Activated CD4-positive, alpha-beta T cell treated with anti-CD3 and anti-CD28 coated beads for 36 hours (primary cell): ENCODE measurements at regions of chr15 and their contacts with region 1.

Region 1: DNA sequence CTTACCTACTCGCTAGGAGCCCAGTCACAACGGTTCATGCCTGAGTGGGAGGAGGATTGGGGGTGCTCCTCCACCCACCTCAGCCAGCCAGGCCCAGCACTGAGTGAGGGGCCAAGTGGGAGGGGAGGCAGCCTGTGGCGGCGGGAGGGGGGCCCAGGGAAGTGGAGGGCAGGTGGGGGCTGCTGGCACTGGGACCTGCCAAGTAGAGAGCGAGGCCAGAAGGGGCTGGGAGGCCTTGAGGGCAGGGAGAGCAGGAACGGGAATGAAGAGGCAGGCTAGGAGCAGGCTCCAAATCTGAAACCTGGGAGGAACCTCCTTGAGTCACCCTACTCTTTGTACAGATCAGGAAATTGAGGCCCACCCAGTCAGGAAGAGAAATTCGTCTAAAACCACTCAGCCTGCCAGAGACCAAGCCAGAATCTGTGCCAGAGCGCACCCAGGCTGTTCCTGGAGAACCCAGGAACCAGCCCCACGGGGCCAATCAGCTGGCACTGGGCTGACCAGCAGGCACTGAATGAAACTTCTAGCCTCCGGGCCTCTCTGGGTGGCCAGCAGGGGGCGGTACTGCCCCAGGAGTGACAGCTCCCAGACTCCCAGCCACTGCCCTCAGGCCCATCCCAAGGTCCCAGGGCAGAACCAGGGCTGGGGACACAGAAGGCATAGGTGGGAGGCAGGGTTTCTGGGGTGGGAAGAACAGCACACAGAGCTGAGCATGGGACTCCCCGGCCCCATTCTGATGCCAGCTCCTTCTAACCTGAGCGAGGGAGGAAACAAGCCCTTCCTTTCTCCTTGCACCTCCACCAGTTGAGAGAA is 14.8 kb upstream of the CYP11A1 start:
- DNase-seq: peak; percentile 87
- ATAC-seq: peak; percentile 13
- H3K4me3 Mint-ChIP-seq: no peak overlapping the region
- H3K27ac Mint-ChIP-seq: peak overlapping the region; percentile 97
- H3K4me1 Mint-ChIP-seq: peaks cover 80% of the 10 kb centered on the region
- H3K27me3 Mint-ChIP-seq: no peaks in the 10 kb centered on the region

Region 2: GRCh38 chr15:74396445-74397238 is 14.4 kb after region 1 on chr15:
- CTCF ChIA-PET with region 1: interaction called, 48 read pairs
- POLR2A ChIA-PET with region 1: interaction called, 7 read pairs
- intact Hi-C with region 1: loop called (anchors 1 kb)
- DNase-seq: peak; percentile 83
- ATAC-seq: peak; percentile 57
- H3K4me3 Mint-ChIP-seq: peak overlapping the region; percentile 18
- H3K27ac Mint-ChIP-seq: peak overlapping the region; percentile 98
- H3K4me1 Mint-ChIP-seq: peaks cover 92% of the 10 kb centered on the region
- H3K27me3 Mint-ChIP-seq: no peaks in the 10 kb centered on the region

Region 3: DNA sequence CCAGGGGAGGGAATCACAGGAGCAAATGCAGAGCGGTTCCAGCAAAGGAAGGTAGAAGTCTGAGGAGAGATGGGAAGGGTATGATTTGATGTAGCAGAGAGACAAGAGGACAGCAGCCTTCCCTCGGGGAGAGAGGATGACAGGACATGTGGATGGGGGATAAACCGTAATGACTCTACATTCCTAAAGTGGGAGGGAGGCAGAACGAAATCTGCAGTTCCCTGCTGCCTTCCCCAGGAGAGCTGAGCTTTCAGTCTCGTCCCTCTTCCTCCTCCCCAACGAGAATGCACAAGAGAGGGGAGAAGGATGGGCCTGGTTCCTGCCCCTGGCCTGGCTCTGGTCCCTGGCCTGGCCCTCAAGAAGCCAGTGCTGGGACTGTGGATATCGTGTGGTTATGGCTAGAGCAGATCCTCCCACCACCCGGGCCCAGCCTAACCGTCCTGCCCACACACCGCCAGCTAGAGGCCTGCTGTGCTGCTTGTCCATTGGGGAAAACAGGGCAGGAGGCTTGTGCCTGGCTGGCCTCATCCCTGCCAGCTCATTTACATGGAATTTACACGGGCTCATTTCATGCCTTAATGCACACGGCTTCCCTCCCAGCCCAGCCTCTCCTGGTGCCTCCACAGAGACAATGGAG is 25.0 kb after region 1 on chr15:
- CTCF ChIA-PET with region 1: interaction called, 37 read pairs
- POLR2A ChIA-PET with region 1: interaction called, 8 read pairs
- intact Hi-C with region 1: loop called in 1 of 2 experiments (anchors 1 kb)
- DNase-seq: no peak
- ATAC-seq: no peak
- H3K4me3 Mint-ChIP-seq: no peak overlapping the region
- H3K27ac Mint-ChIP-seq: no peak overlapping the region
- H3K4me1 Mint-ChIP-seq: peaks cover 29% of the 10 kb centered on the region
- H3K27me3 Mint-ChIP-seq: no peaks in the 10 kb centered on the region

Region 4: DNA sequence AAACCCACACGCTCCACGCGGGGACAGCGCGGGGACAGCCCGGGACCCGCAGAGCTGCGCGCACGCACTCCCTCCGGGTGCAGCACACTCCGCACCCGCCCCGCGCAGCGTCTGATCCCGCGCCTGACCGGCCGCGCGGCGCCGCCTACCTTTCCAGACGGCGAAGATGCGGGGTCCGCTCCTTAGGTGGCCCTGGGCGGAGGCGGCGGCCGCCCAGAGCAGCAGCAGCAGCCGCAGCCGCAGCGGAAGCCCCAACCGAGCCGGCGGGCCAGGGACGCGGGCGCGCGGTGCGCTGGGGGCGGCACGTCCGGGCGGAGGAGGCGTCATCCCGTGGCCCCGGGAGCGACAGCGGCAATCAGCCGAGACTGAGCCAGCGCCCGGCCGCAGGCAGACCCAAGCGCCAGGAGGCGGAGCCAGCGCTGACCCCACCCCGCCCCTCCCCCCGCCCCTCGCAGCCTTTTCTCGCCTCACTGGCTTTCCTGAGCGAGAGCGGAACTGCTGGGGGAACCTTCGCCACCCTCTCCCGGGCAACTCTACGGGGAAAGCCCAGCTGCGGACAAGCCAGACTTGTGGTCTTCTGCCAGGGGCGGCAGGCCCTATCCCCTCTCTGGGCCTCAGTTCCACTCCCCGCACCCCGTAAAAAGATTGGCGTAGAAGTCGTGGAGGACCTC is 51.5 kb after region 1 on chr15 and contains the start of gene SEMA7A:
- CTCF ChIA-PET with region 1: interaction called, 176 read pairs
- POLR2A ChIA-PET with region 1: interaction called, 4 read pairs
- intact Hi-C with region 1: loop called (anchors 1 kb)
- DNase-seq: peak; percentile 90
- ATAC-seq: peak; percentile 89
- H3K4me3 Mint-ChIP-seq: peak within 1 kb of the TSS; percentile 83
- H3K27ac Mint-ChIP-seq: peak within 1 kb of the TSS; percentile 56
- H3K4me1 Mint-ChIP-seq: peaks cover 59% of the 10 kb centered on the region
- H3K27me3 Mint-ChIP-seq: no peaks in the 10 kb centered on the region
- total RNA-seq, gene SEMA7A: 57.3 to 57.7 TPM

Region 5: DNA sequence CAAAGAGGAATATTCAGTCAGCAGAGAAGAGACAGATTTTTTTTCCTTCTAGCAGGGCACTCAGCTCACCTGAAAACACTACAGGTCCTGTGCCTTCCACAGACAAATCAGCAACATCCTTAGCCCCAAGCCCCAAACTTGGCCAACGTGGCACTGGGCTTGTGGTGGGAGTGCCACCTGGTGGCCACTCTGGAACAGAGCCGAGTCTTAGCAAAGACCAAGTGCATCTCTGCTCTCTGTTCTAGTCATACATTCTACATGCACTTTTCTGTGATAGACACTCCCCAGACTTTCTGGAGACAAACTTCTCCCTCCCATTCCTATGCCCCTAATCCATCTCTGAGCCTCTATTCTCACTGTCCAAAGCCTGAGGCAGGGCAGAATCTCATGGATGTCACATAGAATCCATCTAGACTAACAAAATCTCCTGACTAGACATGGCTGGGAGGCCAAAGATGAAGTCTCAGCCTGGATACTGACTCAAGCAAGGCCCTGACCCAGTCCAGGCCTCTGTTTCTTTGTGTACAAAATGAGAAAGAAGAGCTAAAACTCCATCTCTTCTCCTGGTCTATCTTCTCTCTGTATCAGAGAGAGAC is 56.6 kb after region 1 on chr15:
- CTCF ChIA-PET with region 1: interaction called, 176 read pairs
- POLR2A ChIA-PET with region 1: interaction called, 13 read pairs
- intact Hi-C with region 1: loop called (anchors 1 kb)
- DNase-seq: peak; percentile 90
- ATAC-seq: peak; percentile 86
- H3K4me3 Mint-ChIP-seq: no peak overlapping the region
- H3K27ac Mint-ChIP-seq: no peak overlapping the region
- H3K4me1 Mint-ChIP-seq: peaks cover 30% of the 10 kb centered on the region
- H3K27me3 Mint-ChIP-seq: no peaks in the 10 kb centered on the region

Region 6: DNA sequence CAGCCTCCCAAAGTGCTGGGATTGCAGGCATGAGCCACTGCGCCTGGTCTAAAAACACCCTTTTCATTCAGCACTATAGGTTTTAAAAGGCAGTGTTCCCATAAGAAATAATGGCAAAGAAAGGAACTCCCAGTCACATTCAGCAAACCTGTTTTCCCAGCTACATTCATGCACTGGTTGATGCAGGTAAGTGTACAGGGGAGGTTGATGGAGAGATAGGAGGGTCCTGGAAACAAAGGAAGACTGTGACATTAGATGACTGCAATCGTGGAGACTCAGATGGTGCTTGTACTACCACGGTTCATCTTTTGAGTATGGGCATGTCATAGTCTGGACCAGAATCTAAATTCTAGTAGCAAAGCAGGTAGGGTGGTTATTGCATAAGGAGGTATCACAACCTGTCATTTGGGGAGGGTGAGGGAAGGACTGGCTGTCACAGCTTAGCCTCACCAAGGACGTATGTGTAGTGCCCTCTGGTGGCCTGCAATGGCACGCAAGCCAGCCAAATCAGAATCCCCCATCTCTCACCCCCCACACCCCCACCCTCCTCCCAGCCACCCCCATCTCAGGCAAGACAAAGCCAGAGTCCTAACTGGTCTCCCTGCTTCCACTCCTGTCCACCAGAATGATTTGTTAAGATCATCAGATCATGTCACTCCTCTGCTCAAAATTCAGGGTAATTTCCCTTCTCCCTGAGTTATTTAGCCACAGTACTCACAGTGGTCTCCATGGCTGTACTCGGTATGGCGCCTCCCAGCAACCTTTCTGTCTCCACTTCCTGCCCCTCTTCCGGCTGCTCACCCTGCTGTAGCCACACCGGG is 107.5 kb after region 1 on chr15:
- CTCF ChIA-PET with region 1: interaction called, 5 read pairs
- POLR2A ChIA-PET with region 1: interaction called, 3 read pairs
- intact Hi-C with region 1: loop called in 1 of 2 experiments (anchors 2 kb)
- DNase-seq: peak; percentile 85
- ATAC-seq: peak; percentile 92
- H3K4me3 Mint-ChIP-seq: no peak overlapping the region
- H3K27ac Mint-ChIP-seq: no peak overlapping the region
- H3K4me1 Mint-ChIP-seq: peaks cover 12% of the 10 kb centered on the region
- H3K27me3 Mint-ChIP-seq: no peaks in the 10 kb centered on the region